Activated B cell treated with CpG ODN at 0.5 μM for 24 hours (primary cell): ENCODE measurements at regions of chr16 and their contacts with region 1.

Region 1: DNA sequence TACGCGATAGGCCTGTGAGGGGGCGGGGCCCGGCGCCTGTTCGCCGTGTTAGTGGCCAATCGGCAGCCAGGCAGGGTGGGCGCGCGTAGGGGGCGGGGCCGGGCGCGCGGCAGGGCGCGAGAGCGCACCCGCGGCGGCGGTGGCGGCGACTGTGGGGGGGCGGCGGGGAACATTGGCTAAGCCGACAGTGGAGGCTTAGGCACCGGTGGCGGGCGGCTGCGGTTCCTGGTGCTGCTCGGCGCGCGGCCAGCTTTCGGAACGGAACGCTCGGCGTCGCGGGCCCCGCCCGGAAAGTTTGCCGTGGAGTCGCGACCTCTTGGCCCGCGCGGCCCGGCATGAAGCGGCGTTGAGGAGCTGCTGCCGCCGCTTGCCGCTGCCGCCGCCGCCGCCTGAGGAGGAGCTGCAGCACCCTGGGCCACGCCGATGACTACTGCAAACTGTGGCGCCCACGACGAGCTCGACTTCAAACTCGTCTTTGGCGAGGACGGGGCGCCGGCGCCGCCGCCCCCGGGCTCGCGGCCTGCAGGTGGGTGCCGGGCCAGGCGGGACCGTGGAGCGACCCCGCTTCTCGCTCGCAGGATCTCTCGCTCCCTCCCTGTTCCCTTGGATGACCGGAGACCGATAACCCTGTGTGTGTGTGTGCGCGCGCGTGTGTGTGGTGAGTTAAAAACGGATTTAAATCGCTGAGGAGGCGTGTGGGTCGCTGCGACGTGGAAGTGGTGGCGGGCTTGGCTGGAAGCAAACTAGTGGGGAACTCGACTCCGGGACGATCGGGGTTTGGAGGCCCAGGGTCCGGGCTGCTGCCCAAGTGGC is at the start of gene NFATC3:
- DNase-seq: peak; percentile 96
- ATAC-seq: peak; percentile 78
- H3K4me3 Mint-ChIP-seq: peak within 1 kb of the TSS; percentile 98
- H3K27ac Mint-ChIP-seq: peak within 1 kb of the TSS; percentile 97
- H3K4me1 Mint-ChIP-seq: peaks cover 77% of the 10 kb centered on the region
- H3K27me3 Mint-ChIP-seq: no peaks in the 10 kb centered on the region
- CTCF ChIP-seq: no peak
- total RNA-seq, gene NFATC3: 64.8 and 72.0 TPM in 2 replicates

Region 2: DNA sequence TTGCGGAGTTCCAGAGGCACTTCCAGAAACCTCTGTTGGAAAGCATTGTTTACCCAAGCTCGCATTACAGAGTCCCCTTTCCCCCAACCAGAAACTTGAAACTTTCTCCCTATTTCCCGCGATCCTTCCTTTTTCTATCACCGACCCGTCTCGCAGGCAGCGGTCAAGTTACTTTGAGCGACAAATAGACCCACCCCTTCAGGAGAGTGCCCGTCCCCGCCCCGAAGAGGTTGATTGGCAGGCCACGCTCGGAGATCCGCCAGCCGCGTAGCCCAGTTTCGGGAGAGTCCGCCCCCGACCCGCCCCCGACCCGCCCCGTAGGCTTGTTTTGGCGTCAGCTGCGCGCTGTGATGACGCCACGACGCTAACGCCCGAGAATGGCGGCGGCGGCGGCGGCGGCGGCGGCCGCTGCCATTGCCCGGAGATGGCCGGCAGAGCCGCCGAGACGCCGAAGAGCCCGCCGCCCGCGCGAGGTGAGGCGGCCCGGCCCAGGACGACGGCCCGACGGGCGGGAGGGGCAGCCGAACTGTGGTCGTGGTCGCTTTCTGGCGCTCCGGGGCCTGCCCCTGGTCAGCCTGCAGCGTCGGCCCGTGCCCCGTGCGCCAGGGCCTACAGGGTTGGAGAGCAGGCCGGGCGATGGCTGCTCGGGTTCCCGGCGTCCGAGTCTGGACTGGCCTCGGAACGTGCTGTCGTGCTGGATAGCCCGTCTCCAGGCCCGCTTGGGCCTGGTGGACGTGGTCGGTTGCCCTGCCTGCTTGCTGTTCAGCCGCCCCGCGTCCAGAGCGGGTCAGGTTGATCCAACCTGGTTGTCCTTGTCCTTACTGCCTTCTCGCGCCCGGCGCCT is 192.3 kb before region 1 on chr16 and contains the start of gene PSKH1:
- CTCF ChIA-PET with region 1: no interaction called
- POLR2A ChIA-PET with region 1: interaction called, 4 read pairs
- intact Hi-C with region 1: loop called (anchors 2 kb)
- DNase-seq: peak; percentile 80
- ATAC-seq: peak; percentile 99
- H3K4me3 Mint-ChIP-seq: peak within 1 kb of the TSS; percentile 94
- H3K27ac Mint-ChIP-seq: peak within 1 kb of the TSS; percentile 86
- H3K4me1 Mint-ChIP-seq: peaks cover 31% of the 10 kb centered on the region
- H3K27me3 Mint-ChIP-seq: no peaks in the 10 kb centered on the region
- CTCF ChIP-seq: no peak
- total RNA-seq, gene PSKH1: 19.2 and 22.0 TPM in 2 replicates

Region 3: DNA sequence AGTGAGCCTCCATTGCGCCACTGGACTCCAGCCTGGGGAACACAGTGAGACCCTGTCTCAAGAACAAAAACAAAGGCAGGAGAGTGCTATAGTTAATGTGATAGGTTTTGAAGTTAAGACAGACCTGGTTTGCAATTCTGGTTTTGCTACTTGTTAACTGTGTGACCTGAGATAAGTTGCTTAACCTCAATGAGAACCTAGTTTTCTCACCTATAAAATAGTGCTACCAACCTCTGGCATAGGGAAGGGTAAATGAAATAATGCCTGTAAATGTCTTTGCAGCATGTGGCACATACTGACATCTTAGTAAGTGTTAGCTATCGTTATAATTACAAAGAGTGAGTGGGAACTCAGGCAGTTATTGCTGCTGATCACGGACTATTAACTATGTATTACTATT is 30.1 kb before region 1 on chr16:
- CTCF ChIA-PET with region 1: no interaction called
- POLR2A ChIA-PET with region 1: no interaction called
- intact Hi-C with region 1: no loop called
- DNase-seq: no peak
- ATAC-seq: no peak
- H3K4me3 Mint-ChIP-seq: no peak overlapping the region
- H3K27ac Mint-ChIP-seq: no peak overlapping the region
- H3K4me1 Mint-ChIP-seq: peaks cover 5% of the 10 kb centered on the region
- H3K27me3 Mint-ChIP-seq: no peaks in the 10 kb centered on the region
- CTCF ChIP-seq: no peak

Region 4: GRCh38 chr16:68074850-68075555 is 10.5 kb before region 1 on chr16:
- CTCF ChIA-PET with region 1: interaction called, 54 read pairs
- POLR2A ChIA-PET with region 1: interaction called, 211 read pairs
- intact Hi-C with region 1: loop called (anchors 1 kb)
- DNase-seq: peak; percentile 76
- ATAC-seq: peak; percentile 90
- H3K4me3 Mint-ChIP-seq: peak overlapping the region; percentile 81
- H3K27ac Mint-ChIP-seq: peak overlapping the region; percentile 96
- H3K4me1 Mint-ChIP-seq: peaks cover 88% of the 10 kb centered on the region
- H3K27me3 Mint-ChIP-seq: no peaks in the 10 kb centered on the region
- CTCF ChIP-seq: no peak

Region 5: GRCh38 chr16:68116256-68116867 is 30.9 kb after region 1 on chr16:
- CTCF ChIA-PET with region 1: interaction called, 5 read pairs
- POLR2A ChIA-PET with region 1: interaction called, 22 read pairs
- intact Hi-C with region 1: loop called (anchors 2 kb)
- DNase-seq: no peak
- ATAC-seq: no peak
- H3K4me3 Mint-ChIP-seq: no peak overlapping the region
- H3K27ac Mint-ChIP-seq: peak overlapping the region; percentile 3
- H3K4me1 Mint-ChIP-seq: peaks cover 87% of the 10 kb centered on the region
- H3K27me3 Mint-ChIP-seq: no peaks in the 10 kb centered on the region
- CTCF ChIP-seq: peak; percentile 14

Region 6: DNA sequence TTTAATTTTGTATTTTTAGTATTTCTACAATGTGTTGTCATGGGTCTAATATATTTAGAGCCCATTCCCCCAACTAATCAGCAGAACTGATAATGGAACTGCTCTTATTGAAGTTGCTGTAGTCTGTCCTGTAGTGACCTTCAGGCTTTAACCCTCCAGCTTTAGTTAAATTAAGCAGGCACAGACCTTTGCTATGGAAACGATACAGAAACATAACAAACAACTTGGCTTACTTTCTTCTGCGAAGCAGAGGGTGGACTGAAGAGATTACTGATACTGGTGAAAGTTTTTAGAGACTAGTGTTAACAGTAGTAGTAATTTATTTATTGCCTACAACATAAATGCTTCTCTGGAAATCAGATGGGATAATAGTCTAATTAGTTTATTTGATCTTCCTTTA is 61.1 kb after region 1 on chr16:
- CTCF ChIA-PET with region 1: no interaction called
- POLR2A ChIA-PET with region 1: no interaction called
- intact Hi-C with region 1: no loop called
- DNase-seq: no peak
- ATAC-seq: no peak
- H3K4me3 Mint-ChIP-seq: no peak overlapping the region
- H3K27ac Mint-ChIP-seq: no peak overlapping the region
- H3K4me1 Mint-ChIP-seq: peaks cover 29% of the 10 kb centered on the region
- H3K27me3 Mint-ChIP-seq: no peaks in the 10 kb centered on the region
- CTCF ChIP-seq: no peak

Region 7: GRCh38 chr16:68179196-68179795 is 93.8 kb after region 1 on chr16:
- CTCF ChIA-PET with region 1: no interaction called
- POLR2A ChIA-PET with region 1: no interaction called
- intact Hi-C with region 1: no loop called
- DNase-seq: no peak
- ATAC-seq: no peak
- H3K4me3 Mint-ChIP-seq: no peak overlapping the region
- H3K27ac Mint-ChIP-seq: no peak overlapping the region
- H3K4me1 Mint-ChIP-seq: no peaks in the 10 kb centered on the region
- H3K27me3 Mint-ChIP-seq: no peaks in the 10 kb centered on the region
- CTCF ChIP-seq: no peak

Region 8: GRCh38 chr16:68310761-68311511 is 225.5 kb after region 1 on chr16 and contains the starts of genes PRMT7 and SLC7A6OS:
- CTCF ChIA-PET with region 1: no interaction called
- POLR2A ChIA-PET with region 1: interaction called, 11 read pairs
- intact Hi-C with region 1: no loop called
- DNase-seq: peak; percentile 87
- ATAC-seq: peak; percentile 99
- H3K4me3 Mint-ChIP-seq: peak within 1 kb of the TSS; percentile 98
- H3K27ac Mint-ChIP-seq: peak within 1 kb of the TSS; percentile 93
- H3K4me1 Mint-ChIP-seq: peaks cover 38% of the 10 kb centered on the region
- H3K27me3 Mint-ChIP-seq: no peaks in the 10 kb centered on the region
- CTCF ChIP-seq: no peak
- total RNA-seq, gene PRMT7: 41.8 and 50.3 TPM in 2 replicates
- total RNA-seq, gene SLC7A6OS: 34.8 and 42.0 TPM in 2 replicates